Calu3 (cell line): ENCODE measurements at regions of chr16 and their contacts with region 1.

Region 1: GRCh38 chr16:397736-398332 is 835 bp downstream of the NME4 start:
- DNase-seq: peak; percentile 78
- H3K4me3 Mint-ChIP-seq: peak overlapping the region; percentile 63
- H3K27ac Mint-ChIP-seq: peak overlapping the region; percentile 33
- H3K4me1 Mint-ChIP-seq: peaks cover 9% of the 10 kb centered on the region
- H3K27me3 Mint-ChIP-seq: no peaks in the 10 kb centered on the region
- CTCF ChIP-seq: no peak

Region 2: GRCh38 chr16:287298-287811 is 110.5 kb before region 1 on chr16:
- CTCF ChIA-PET with region 1: no interaction called
- intact Hi-C with region 1: no loop called
- DNase-seq: no peak
- H3K4me3 Mint-ChIP-seq: no peak overlapping the region
- H3K27ac Mint-ChIP-seq: no peak overlapping the region
- H3K4me1 Mint-ChIP-seq: no peaks in the 10 kb centered on the region
- H3K27me3 Mint-ChIP-seq: peaks cover 8% of the 10 kb centered on the region
- CTCF ChIP-seq: no peak

Region 3: DNA sequence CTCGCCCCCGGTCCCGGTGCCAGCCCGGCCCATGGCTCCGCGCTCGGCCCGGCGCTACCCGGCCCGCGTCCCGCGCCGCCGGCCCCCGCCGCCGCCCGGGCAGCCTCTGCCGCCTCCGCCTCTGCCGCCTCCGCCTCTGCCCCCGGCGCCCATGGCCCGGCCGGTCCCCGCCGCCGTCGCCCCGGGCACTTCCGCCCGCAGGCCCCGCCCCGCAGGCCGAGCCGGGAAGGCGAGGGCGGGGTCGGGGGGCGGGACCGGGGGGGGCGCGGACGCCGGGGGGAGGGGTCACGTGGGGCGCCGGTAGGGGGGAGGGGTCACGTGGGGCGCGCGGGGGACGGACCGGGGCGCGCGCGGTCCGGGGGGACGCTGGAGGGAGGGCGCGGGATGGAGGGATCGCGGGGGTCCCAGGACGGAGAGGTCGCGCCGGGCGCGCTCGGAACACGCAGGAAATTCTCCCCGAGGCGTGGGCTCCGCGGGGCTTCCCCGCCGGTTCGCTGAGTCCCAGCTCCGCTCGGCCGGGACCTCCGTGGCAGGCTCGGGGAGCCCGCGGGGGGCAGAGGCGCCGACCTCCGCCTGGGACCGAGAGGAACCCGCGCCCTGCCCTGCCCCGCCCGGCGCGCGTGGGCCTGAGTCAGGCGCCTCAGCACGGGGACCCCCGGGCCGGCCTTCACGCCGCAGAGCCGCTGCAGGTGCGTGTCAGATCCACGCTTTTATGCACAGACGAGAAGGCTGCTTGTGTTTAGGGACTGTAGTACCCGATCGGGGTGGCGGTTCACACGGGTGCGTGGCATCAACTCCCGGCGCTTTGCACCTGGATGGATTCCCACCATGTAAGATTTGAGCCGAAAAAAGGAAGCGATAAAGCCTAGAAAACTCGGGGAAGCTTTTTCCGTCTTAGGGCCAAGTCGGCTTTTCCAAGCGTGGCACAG is 15.8 kb before region 1 on chr16 and contains the start of gene PGAP6:
- CTCF ChIA-PET with region 1: interaction called, 5 read pairs
- intact Hi-C with region 1: loop called (anchors 2 kb)
- DNase-seq: peak; percentile 86
- H3K4me3 Mint-ChIP-seq: peak within 1 kb of the TSS; percentile 50
- H3K27ac Mint-ChIP-seq: peak within 1 kb of the TSS; percentile 55
- H3K4me1 Mint-ChIP-seq: peaks cover 9% of the 10 kb centered on the region
- H3K27me3 Mint-ChIP-seq: no peaks in the 10 kb centered on the region
- CTCF ChIP-seq: no peak
- total RNA-seq, gene PGAP6: 70.0 and 78.5 TPM in 2 replicates

Region 4: GRCh38 chr16:558298-559020 is 160.6 kb after region 1 on chr16:
- CTCF ChIA-PET with region 1: no interaction called
- intact Hi-C with region 1: no loop called
- DNase-seq: no peak
- H3K4me3 Mint-ChIP-seq: no peak overlapping the region
- H3K27ac Mint-ChIP-seq: no peak overlapping the region
- H3K4me1 Mint-ChIP-seq: no peaks in the 10 kb centered on the region
- H3K27me3 Mint-ChIP-seq: peaks cover 55% of the 10 kb centered on the region
- CTCF ChIP-seq: no peak